ENCODE measurements at regions of chr5 and their contacts with region 1.

Region 1: GRCh38 chr5:119287547-119288073 is 68.2 kb upstream of the TNFAIP8 start:
- DNase-seq: no peak
- H3K4me3 Mint-ChIP-seq: peak overlapping the region; percentile 72
- H3K27ac Mint-ChIP-seq: peak overlapping the region; percentile 93
- H3K4me1 Mint-ChIP-seq: peaks cover 99% of the 10 kb centered on the region
- H3K27me3 Mint-ChIP-seq: no peaks in the 10 kb centered on the region

Region 2: GRCh38 chr5:119302916-119303897 is 15.6 kb after region 1 on chr5:
- intact Hi-C with region 1: loop called (anchors 1 kb)
- DNase-seq: no peak
- H3K4me3 Mint-ChIP-seq: peak overlapping the region; percentile 48
- H3K27ac Mint-ChIP-seq: peak overlapping the region; percentile 73
- H3K4me1 Mint-ChIP-seq: peaks cover 87% of the 10 kb centered on the region
- H3K27me3 Mint-ChIP-seq: no peaks in the 10 kb centered on the region

Measured in activated T-helper 1 cell treated with anti-CD3 and anti-CD28 coated beads, Interleukin-12 subunit alpha, Interleukin-12 subunit beta, Interleukin-2, Interleukin-4 antibody, amounts not matched to agents 30 ng/mL and 10 ng/mL and 1 ng/mL, durations not matched to agents 14 hours and 24 hours and 36 hours (primary cell).